ENCODE measurements at regions of chr1 and their contacts with region 1.

Region 1: DNA sequence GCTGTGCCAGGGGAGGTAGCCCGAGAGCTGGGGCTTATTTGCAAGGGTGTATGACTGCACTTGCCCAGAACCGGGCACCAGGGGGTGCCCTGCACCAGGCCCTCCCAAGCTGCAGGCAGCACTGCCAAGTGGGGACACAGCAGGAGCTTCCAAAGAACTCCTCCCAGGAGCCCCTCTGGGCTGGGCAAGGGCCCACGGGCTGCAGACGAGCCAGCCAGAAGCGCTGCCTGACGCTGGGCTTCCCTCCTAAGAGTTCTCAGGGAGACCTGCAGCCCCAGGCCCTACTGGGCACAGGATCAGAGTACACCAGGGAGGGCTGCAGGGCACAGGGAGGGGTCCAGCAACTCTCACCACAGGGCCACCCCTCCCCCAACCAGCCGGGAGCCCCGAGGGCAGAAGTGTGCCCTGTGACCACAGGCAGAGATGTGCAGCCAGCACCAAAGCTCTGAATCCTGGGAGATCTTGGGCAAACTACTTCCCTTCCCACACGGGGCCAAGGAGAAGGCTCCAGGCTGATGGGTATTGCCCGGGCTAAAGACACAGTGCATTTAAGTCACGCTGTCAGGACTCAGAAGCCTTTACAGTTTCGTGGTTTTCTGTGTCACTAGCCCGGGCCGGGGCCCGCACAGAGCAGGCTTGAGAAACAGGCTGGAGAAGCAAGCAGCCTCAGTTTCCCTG is 63.4 kb downstream of the KCNAB2 start:
- DNase-seq: peak; percentile 50
- H3K4me3 ChIP-seq: no peak overlapping the region
- H3K27ac ChIP-seq: no peak overlapping the region
- H3K4me1 ChIP-seq: peaks cover 4% of the 10 kb centered on the region
- H3K27me3 ChIP-seq: no peaks in the 10 kb centered on the region
- CTCF ChIP-seq: peak; percentile 61 to 96

Region 2: DNA sequence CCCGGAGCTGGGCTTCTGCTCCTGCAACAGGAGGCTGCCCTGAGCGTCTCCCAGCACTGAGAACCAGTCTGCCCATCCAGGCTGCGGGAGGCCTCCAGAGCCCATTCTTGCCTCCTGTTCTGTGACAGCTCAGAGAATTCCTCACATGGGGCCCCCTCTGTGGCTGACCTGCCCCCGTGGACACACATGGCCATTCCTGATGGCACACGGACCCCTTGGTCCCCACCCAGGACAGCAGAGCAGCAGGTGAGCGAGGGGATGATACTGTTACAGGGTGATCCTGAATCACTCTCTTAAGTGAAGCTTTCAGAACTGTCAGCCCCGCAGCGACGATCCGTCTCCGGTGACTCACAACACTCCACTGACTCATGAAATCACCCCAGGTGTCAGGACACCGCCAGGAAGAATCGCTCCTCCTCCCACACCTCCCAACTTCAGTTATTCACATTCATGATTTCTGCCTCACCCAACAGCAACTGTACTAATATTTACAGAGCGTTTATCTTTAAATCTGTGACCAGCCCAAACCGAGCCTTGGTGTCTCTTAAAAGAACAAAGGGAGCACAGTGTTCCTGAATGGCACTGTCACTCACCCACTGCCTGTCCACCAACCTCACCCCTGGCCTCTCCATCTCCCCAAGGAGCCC is 48.6 kb after region 1 on chr1:
- CTCF ChIA-PET with region 1: interaction called, 3 read pairs
- dilution Hi-C with region 1: loop called (anchors 5 kb)
- in situ Hi-C with region 1: no loop called
- intact Hi-C with region 1: no loop called
- DNase-seq: peak; percentile 96
- H3K4me3 ChIP-seq: no peak overlapping the region
- H3K27ac ChIP-seq: peak overlapping the region; percentile 78
- H3K4me1 ChIP-seq: peaks cover 22% of the 10 kb centered on the region
- H3K27me3 ChIP-seq: no peaks in the 10 kb centered on the region
- CTCF ChIP-seq: no peak

Region 3: DNA sequence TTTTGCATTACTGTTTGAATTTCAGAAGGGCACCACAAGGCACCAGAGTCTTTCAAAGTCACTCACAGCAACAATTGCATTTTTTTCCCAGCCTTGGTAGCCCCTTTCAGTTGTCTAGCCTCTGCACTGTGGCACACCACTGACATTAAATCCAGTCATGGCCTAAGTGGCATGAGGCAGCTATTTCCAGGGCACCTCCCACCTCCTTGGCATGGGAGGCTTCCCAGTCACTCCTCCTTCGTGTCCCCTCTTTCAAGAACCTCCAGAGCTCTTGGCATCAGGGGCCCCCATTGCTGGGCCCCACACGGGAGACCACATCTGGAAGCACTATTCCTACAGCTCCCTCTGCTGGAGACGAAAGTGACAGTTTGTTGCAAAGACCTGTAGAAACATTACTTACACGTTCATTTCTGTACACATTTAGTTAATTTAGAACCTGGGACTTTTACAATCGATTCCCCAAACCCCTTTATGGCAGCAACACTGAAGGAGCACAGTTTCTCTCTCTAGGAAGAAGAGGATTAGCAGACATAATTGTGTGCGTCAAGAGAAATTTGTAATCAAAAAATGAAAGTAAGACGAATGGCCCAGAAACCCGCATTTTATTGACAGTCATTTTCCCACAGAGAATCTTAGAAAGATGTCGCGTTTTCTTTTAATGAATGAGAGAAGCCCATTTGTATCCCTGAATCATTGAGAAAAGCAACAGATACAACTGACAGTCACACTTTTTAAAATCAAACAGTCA is 76.7 kb after region 1 on chr1:
- CTCF ChIA-PET with region 1: no interaction called
- dilution Hi-C with region 1: loop called (anchors 5 kb)
- in situ Hi-C with region 1: no loop called
- intact Hi-C with region 1: loop called (anchors 1 kb)
- DNase-seq: no peak
- H3K4me3 ChIP-seq: no peak overlapping the region
- H3K27ac ChIP-seq: no peak overlapping the region
- H3K4me1 ChIP-seq: peaks cover 21% of the 10 kb centered on the region
- H3K27me3 ChIP-seq: no peaks in the 10 kb centered on the region
- CTCF ChIP-seq: peak; percentile 31 to 60

Region 4: GRCh38 chr1:6205849-6206519 is 96.9 kb after region 1 on chr1 and contains the start of gene RNF207:
- CTCF ChIA-PET with region 1: no interaction called
- dilution Hi-C with region 1: no loop called
- in situ Hi-C with region 1: no loop called
- intact Hi-C with region 1: loop called (anchors 1 kb)
- DNase-seq: peak; percentile 84
- H3K4me3 ChIP-seq: peak within 1 kb of the TSS; percentile 37 to 70 (median 61)
- H3K27ac ChIP-seq: no peak within 1 kb of the TSS
- H3K4me1 ChIP-seq: peaks cover 20% of the 10 kb centered on the region
- H3K27me3 ChIP-seq: no peaks in the 10 kb centered on the region
- CTCF ChIP-seq: no peak
- total RNA-seq, gene RNF207: 25.7 to 26.5 TPM

Region 5: GRCh38 chr1:6245086-6245868 is 136.2 kb after region 1 on chr1:
- CTCF ChIA-PET with region 1: interaction called, 7 read pairs
- dilution Hi-C with region 1: no loop called
- in situ Hi-C with region 1: no loop called
- intact Hi-C with region 1: loop called (anchors 1 kb)
- DNase-seq: peak; percentile 77
- H3K4me3 ChIP-seq: peak overlapping the region; percentile 30 to 39 (median 33)
- H3K27ac ChIP-seq: no peak overlapping the region
- H3K4me1 ChIP-seq: peaks cover 18% of the 10 kb centered on the region
- H3K27me3 ChIP-seq: peaks cover 20% of the 10 kb centered on the region
- CTCF ChIP-seq: peak; percentile 71 to 93

Region 6: GRCh38 chr1:6401673-6402072 is 292.6 kb after region 1 on chr1:
- CTCF ChIA-PET with region 1: no interaction called
- dilution Hi-C with region 1: no loop called
- in situ Hi-C with region 1: no loop called
- intact Hi-C with region 1: loop called (anchors 2 kb)
- DNase-seq: peak; percentile 67
- H3K4me3 ChIP-seq: no peak overlapping the region
- H3K27ac ChIP-seq: no peak overlapping the region
- H3K4me1 ChIP-seq: no peaks in the 10 kb centered on the region
- H3K27me3 ChIP-seq: no peaks in the 10 kb centered on the region
- CTCF ChIP-seq: no peak

Measured in mammary epithelial cell (primary cell).